ENCODE measurements at regions of chr16 and their contacts with region 1.

Region 1: DNA sequence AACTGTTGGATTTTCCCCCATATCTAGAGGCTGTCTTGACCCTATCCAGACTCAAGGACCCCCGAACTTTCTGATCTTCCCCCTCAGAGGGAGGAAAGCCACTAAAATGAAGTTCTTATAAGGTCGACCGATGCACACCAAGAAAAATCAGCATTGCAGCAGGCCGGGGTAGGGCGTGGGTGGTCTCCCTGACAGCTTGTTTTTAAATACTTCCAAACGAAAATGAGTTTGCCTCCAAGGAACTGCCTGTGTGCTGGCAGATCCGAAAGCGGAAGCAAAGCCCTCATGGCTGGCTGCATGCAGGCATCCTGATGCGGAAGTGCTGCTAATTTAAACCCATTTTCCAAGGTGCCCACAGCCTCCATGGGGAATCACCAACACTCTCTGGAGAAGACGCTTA is 374.3 kb upstream of the XYLT1 start:
- DNase-seq: no peak
- ATAC-seq: no peak
- H3K4me3 ChIP-seq: no peak overlapping the region
- H3K4me3 Mint-ChIP-seq: no peak overlapping the region
- H3K27ac ChIP-seq: no peak overlapping the region
- H3K27ac Mint-ChIP-seq: no peak overlapping the region
- H3K4me1 ChIP-seq: no peaks in the 10 kb centered on the region
- H3K4me1 Mint-ChIP-seq: no peaks in the 10 kb centered on the region
- H3K27me3 ChIP-seq: no peaks in the 10 kb centered on the region
- H3K27me3 Mint-ChIP-seq: peaks cover 6% of the 10 kb centered on the region
- CTCF ChIP-seq: no peak

Region 2: GRCh38 chr16:17828012-17828411 is 17.0 kb before region 1 on chr16:
- CTCF ChIA-PET with region 1: interaction called, 3 read pairs
- POLR2A ChIA-PET with region 1: no interaction called
- intact Hi-C with region 1: loop called in 1 of 2 experiments (anchors 2 kb)
- DNase-seq: no peak
- ATAC-seq: no peak
- H3K4me3 ChIP-seq: no peak overlapping the region
- H3K4me3 Mint-ChIP-seq: no peak overlapping the region
- H3K27ac ChIP-seq: no peak overlapping the region
- H3K27ac Mint-ChIP-seq: no peak overlapping the region
- H3K4me1 ChIP-seq: no peaks in the 10 kb centered on the region
- H3K4me1 Mint-ChIP-seq: no peaks in the 10 kb centered on the region
- H3K27me3 ChIP-seq: no peaks in the 10 kb centered on the region
- H3K27me3 Mint-ChIP-seq: peaks cover 2% of the 10 kb centered on the region
- CTCF ChIP-seq: no peak

Region 3: DNA sequence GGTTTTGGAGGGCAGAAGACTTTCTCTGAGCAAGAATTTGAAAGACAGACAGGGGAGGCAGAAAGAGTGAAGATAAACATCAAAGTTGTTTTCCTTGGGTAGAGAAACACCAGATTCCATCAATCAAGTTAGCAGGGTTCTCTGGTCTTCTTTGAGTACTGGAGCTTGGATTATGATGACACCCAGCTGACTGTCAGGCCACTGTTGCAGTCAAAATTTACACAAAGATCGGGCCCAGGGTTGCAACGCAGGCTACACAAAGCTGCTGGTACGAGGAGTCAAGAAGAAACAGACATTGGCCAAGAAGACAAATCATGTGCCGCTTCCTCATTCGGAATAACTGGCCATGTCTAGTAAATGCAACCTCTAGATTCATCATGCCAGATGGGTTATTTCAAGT is 22.0 kb after region 1 on chr16:
- CTCF ChIA-PET with region 1: no interaction called
- POLR2A ChIA-PET with region 1: no interaction called
- intact Hi-C with region 1: no loop called
- DNase-seq: no peak
- ATAC-seq: no peak
- H3K4me3 ChIP-seq: no peak overlapping the region
- H3K4me3 Mint-ChIP-seq: no peak overlapping the region
- H3K27ac ChIP-seq: no peak overlapping the region
- H3K27ac Mint-ChIP-seq: no peak overlapping the region
- H3K4me1 ChIP-seq: no peaks in the 10 kb centered on the region
- H3K4me1 Mint-ChIP-seq: no peaks in the 10 kb centered on the region
- H3K27me3 ChIP-seq: no peaks in the 10 kb centered on the region
- H3K27me3 Mint-ChIP-seq: peaks cover 3% of the 10 kb centered on the region
- CTCF ChIP-seq: no peak